Activated T-helper 2 cell treated with anti-CD3 and anti-CD28 coated beads, Interferon-gamma antibody, Interleukin-2, Interleukin-4, amounts not matched to agents 10 μg/mL and 5 μg/mL and 100 μg/mL, durations not matched to agents 14 hours and 24 hours and 36 hours (primary cell): ENCODE measurements at regions of chr17 and their contacts with region 1.

Region 1: GRCh38 chr17:65027305-65027704 is 29.2 kb downstream of the GNA13 start:
- DNase-seq: peak; percentile 40
- H3K4me3 Mint-ChIP-seq: peak overlapping the region; percentile 31
- H3K27ac Mint-ChIP-seq: peak overlapping the region; percentile 84
- H3K4me1 Mint-ChIP-seq: peaks cover 63% of the 10 kb centered on the region
- H3K27me3 Mint-ChIP-seq: no peaks in the 10 kb centered on the region

Region 2: GRCh38 chr17:64975329-64976087 is 51.8 kb before region 1 on chr17:
- intact Hi-C with region 1: loop called (anchors 2 kb)
- DNase-seq: peak; percentile 98
- H3K4me3 Mint-ChIP-seq: peak overlapping the region; percentile 81
- H3K27ac Mint-ChIP-seq: peak overlapping the region; percentile 97
- H3K4me1 Mint-ChIP-seq: peaks cover 56% of the 10 kb centered on the region
- H3K27me3 Mint-ChIP-seq: no peaks in the 10 kb centered on the region

Region 3: DNA sequence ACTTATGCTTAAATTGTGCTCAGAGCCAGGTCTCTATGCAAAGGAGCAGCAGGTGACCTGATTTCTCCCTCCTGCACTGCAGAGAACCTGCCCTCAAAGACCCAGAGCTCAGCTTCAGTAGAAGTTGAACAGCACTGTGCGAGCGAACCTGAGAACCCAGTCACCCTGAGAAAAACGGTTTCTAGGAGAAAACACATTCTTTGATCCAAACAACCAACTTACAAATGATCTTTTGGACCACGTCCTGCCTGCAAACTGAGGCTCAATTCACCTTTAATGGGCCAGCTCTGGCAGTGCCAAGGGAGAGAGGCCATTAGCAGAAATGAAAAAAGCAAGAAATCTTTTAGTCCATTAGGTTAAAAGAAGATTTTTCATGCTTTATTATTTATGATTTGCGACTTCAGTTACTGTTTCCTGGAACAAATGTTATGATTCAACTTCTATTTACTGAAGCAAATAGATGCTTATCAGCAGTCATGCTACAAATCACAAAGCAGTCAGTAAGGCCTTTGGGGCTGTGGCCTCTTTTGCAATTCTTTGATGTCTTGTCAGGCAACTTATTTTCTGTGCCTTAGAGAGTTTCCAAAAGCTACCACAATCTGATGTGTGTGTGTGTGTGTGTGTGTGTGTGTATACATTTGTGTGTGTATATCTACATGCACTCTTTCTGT is 42.3 kb before region 1 on chr17:
- intact Hi-C with region 1: loop called (anchors 1 kb)
- DNase-seq: peak; percentile 64
- H3K4me3 Mint-ChIP-seq: peak overlapping the region; percentile 79
- H3K27ac Mint-ChIP-seq: peak overlapping the region; percentile 99
- H3K4me1 Mint-ChIP-seq: peaks cover 47% of the 10 kb centered on the region
- H3K27me3 Mint-ChIP-seq: no peaks in the 10 kb centered on the region

Region 4: GRCh38 chr17:65013613-65014391 is 13.5 kb before region 1 on chr17:
- intact Hi-C with region 1: loop called (anchors 2 kb)
- DNase-seq: no peak
- H3K4me3 Mint-ChIP-seq: no peak overlapping the region
- H3K27ac Mint-ChIP-seq: no peak overlapping the region
- H3K4me1 Mint-ChIP-seq: peaks cover 58% of the 10 kb centered on the region
- H3K27me3 Mint-ChIP-seq: no peaks in the 10 kb centered on the region

Region 5: DNA sequence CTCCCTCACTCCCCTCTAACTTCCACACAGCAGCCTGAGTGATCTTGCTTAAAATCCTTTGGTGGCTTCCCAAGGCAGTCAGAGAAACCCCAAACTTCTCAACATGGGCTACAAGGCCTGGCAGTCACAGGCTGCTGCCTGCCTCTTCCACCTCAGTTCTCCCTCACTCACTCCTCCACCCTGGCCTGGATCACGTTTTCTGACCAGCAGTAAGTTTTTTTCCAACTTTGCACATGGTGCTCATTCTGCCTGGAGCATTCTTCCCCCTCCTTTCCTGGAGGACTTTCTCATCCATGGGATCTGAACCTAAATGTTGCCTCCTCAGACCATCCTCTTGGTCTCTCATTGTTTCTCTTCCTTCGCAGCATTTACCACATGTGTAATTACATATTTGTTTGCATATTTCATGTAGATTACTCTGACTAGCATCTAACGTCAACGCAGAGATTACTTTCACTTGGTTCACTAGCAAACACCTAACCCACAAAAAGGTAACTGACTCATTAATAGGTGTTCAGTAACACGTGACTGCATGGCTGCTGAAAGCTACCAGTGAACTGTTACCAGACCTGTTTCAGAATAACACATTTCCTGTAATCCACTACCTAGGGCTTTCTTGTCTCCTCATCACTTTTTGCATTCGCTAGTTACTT is 12.2 kb after region 1 on chr17:
- intact Hi-C with region 1: loop called (anchors 1 kb)
- DNase-seq: peak; percentile 46
- H3K4me3 Mint-ChIP-seq: peak overlapping the region; percentile 49
- H3K27ac Mint-ChIP-seq: peak overlapping the region; percentile 95
- H3K4me1 Mint-ChIP-seq: peaks cover 74% of the 10 kb centered on the region
- H3K27me3 Mint-ChIP-seq: no peaks in the 10 kb centered on the region

Region 6: DNA sequence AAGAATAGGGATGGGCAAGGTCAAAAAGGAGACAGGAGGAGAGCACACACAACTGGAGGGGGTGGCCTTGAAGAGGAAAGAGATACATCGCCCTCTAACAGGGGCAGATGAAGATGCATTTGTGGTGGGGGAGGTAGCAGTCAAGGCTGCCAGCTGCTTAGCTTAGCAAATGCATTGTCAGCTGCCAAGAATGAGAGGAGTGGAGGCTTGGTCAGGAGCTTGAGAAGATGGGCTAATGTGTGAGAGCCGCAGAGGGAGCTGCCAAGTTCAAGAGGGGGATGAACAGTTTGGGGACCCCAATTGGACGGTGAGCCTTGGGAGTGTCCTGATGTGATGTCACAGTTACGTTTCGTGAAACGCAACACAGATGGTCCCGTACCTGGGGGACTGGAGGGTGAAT is 58.1 kb after region 1 on chr17:
- intact Hi-C with region 1: no loop called
- DNase-seq: no peak
- H3K4me3 Mint-ChIP-seq: no peak overlapping the region
- H3K27ac Mint-ChIP-seq: no peak overlapping the region
- H3K4me1 Mint-ChIP-seq: no peaks in the 10 kb centered on the region
- H3K27me3 Mint-ChIP-seq: peaks cover 11% of the 10 kb centered on the region

Region 7: DNA sequence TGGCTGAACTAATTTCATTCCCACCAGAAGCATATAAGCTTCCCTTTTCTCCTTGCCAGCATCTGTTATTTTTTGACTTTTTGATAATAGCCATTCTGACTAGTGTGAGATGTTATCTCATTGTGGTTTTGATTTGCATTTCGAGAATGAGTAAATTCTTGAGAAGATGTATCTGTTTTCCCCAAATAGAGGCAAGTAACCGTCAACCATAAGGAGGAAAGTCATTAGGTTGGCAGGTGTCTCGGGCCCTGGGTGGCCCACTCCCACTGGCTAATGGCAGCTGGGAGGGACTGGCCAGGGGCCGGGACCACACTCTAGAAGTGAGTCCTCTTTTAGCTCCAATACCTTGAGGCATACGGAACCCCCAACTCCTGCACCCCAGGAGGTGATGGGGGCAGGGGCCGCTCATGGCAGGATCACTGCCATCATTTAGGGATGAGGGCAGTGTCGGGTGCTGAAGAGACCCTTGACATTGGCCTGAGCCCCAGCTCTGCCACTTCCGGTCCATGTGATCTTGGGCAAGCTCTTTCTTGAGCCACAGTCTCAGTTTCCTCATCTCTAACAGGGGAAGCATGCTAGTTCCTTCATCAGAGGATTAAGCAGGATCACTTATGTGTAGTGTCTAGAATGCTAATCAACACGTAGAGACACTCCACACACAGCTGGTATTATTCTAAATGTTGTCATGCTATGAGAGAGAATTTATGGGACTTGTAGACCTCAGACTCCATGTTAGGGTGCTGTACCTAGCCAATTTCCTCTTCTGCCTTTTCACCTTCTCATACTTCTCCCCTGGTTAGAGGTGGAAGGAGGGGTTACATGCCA is 154.1 kb after region 1 on chr17:
- intact Hi-C with region 1: loop called (anchors 2 kb)
- DNase-seq: peak; percentile 55
- H3K4me3 Mint-ChIP-seq: peak overlapping the region; percentile 24
- H3K27ac Mint-ChIP-seq: peak overlapping the region; percentile 96
- H3K4me1 Mint-ChIP-seq: peaks cover 82% of the 10 kb centered on the region
- H3K27me3 Mint-ChIP-seq: no peaks in the 10 kb centered on the region

Region 8: GRCh38 chr17:65219124-65219523 is 191.8 kb after region 1 on chr17:
- intact Hi-C with region 1: no loop called
- DNase-seq: no peak
- H3K4me3 Mint-ChIP-seq: no peak overlapping the region
- H3K27ac Mint-ChIP-seq: no peak overlapping the region
- H3K4me1 Mint-ChIP-seq: peaks cover 6% of the 10 kb centered on the region
- H3K27me3 Mint-ChIP-seq: peaks cover 4% of the 10 kb centered on the region